ENCODE measurements at regions of chr9 and their contacts with region 1.

Region 1: DNA sequence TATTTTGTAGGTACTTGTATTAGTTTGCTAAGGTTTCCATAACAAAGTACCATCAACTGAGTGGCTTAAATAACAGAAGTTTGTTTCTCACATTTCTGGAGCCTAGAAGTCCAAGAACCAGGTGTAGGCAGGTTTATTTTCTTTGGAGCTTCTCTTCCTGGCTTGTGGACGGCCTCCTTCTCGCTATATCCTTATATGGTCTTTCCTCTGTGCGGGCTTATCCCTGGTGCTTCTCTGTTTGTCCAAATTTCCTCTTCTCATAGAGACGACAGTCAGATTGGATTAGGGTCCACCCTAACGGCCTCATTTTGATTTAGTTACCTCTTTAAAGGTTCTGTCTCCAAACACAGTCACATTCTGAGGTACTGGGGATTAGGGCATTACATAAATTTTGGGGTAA is 88.3 kb downstream of the RMI1 start:
- DNase-seq: no peak
- H3K4me3 ChIP-seq: no peak overlapping the region
- H3K27ac ChIP-seq: no peak overlapping the region
- H3K4me1 ChIP-seq: no peaks in the 10 kb centered on the region
- H3K27me3 ChIP-seq: no peaks in the 10 kb centered on the region
- CTCF ChIP-seq: no peak
- POLR2A ChIP-seq: no peak

Region 2: GRCh38 chr9:83385317-83385716 is 683.5 kb before region 1 on chr9:
- intact Hi-C with region 1: loop called (anchors 5 kb)
- DNase-seq: no peak
- H3K4me3 ChIP-seq: no peak overlapping the region
- H3K27ac ChIP-seq: no peak overlapping the region
- H3K4me1 ChIP-seq: no peaks in the 10 kb centered on the region
- H3K27me3 ChIP-seq: no peaks in the 10 kb centered on the region
- CTCF ChIP-seq: no peak
- POLR2A ChIP-seq: no peak

Measured in breast epithelium (tissue), 4 donors.